ENCODE measurements at regions of chr20 and their contacts with region 1.

Region 1: DNA sequence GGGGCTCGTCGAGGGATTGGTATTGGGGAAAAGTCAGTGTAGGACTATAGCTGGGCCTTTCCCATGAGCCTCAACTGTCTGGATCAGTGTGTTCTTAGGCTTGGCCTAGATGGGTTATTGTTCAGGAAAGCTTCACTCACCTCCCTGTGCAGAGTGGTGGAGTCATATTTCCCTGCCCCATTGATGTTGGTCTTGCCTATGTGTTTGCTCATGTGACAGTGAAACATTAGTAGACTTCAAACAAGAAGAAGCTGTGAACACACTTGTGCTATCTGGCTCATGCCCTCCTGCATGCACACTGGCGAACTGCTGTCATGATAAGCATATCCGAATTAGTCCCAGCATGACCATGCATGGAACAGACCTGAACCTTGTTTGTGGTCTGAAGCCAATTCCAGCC is 171.1 kb downstream of the DHX35 start:
- DNase-seq: no peak

Region 2: GRCh38 chr20:40638402-40638801 is 1505.2 kb after region 1 on chr20:
- intact Hi-C with region 1: loop called in 1 of 2 experiments (anchors 5 kb)
- DNase-seq: no peak